CD4-positive, alpha-beta T cell (primary cell): ENCODE measurements at regions of chr9 and their contacts with region 1.

Region 1: DNA sequence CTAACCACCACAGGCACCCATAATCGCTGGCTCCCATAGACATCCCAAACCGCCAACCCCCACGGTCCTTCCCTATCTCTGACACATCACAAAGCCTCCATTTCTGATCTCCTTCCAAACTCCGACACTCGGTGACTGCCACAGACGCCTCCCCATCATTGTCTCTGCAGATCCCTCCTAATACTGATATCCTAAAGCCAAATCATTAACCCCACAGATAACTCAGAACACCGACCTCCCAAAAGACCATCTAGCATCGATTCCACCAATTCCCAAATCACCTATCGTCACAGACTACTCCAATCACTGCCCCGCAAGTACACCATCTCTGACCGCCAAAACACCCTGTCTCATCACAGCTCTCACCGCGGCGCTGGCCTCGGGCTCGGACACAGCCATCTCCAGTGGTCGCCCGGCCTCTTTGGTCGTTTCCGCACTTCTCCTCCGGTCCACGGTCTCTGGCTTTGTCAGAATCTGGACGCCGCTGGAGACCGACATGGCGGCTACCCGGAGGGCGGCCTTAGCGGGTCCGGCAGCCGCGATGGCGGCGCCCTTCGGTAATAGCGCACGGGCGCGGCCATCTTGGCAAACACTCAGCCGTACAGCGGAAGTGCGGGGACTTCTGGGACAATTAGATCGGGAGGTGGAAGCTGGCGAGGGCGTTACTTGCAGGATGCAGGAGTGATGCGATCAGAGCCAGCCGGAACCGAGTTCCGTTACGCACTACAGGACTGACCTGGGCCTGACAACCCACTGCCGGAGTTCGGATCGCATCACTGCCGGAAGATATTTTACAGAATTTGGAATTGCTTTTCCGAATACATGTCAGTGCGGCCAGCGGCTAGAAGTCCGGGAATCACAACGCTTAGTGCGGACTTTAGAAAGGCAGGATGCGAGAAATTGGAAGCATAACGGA is at the start of gene ZFP37:
- DNase-seq: peak; percentile 43 to 87 (median 66)
- ATAC-seq: peak; percentile 93
- H3K4me3 ChIP-seq: peak within 1 kb of the TSS; percentile 63
- H3K4me3 Mint-ChIP-seq: no peak within 1 kb of the TSS
- H3K27ac ChIP-seq: peak within 1 kb of the TSS in 1 of 2 donors; percentile 25
- H3K27ac Mint-ChIP-seq: no peak within 1 kb of the TSS
- H3K4me1 ChIP-seq: peaks cover 11% of the 10 kb centered on the region
- H3K4me1 Mint-ChIP-seq: no peaks in the 10 kb centered on the region
- H3K27me3 ChIP-seq: peaks cover 17 to 18% of the 10 kb centered on the region in 2 experiments
- H3K27me3 Mint-ChIP-seq: peaks cover 18% of the 10 kb centered on the region
- CTCF ChIP-seq: no peak
- total RNA-seq, gene ZFP37: 0.39 to 0.55 TPM

Region 2: GRCh38 chr9:112725961-112726360 is 330.5 kb before region 1 on chr9:
- CTCF ChIA-PET with region 1: no interaction called
- POLR2A ChIA-PET with region 1: no interaction called
- intact Hi-C with region 1: loop called in 1 of 2 experiments (anchors 10 kb)
- DNase-seq: no peak
- ATAC-seq: no peak
- H3K4me3 ChIP-seq: no peak overlapping the region
- H3K4me3 Mint-ChIP-seq: no peak overlapping the region
- H3K27ac ChIP-seq: no peak overlapping the region
- H3K27ac Mint-ChIP-seq: no peak overlapping the region
- H3K4me1 ChIP-seq: no peaks in the 10 kb centered on the region
- H3K4me1 Mint-ChIP-seq: no peaks in the 10 kb centered on the region
- H3K27me3 ChIP-seq: no peaks in the 10 kb centered on the region
- H3K27me3 Mint-ChIP-seq: no peaks in the 10 kb centered on the region
- CTCF ChIP-seq: no peak

Region 3: DNA sequence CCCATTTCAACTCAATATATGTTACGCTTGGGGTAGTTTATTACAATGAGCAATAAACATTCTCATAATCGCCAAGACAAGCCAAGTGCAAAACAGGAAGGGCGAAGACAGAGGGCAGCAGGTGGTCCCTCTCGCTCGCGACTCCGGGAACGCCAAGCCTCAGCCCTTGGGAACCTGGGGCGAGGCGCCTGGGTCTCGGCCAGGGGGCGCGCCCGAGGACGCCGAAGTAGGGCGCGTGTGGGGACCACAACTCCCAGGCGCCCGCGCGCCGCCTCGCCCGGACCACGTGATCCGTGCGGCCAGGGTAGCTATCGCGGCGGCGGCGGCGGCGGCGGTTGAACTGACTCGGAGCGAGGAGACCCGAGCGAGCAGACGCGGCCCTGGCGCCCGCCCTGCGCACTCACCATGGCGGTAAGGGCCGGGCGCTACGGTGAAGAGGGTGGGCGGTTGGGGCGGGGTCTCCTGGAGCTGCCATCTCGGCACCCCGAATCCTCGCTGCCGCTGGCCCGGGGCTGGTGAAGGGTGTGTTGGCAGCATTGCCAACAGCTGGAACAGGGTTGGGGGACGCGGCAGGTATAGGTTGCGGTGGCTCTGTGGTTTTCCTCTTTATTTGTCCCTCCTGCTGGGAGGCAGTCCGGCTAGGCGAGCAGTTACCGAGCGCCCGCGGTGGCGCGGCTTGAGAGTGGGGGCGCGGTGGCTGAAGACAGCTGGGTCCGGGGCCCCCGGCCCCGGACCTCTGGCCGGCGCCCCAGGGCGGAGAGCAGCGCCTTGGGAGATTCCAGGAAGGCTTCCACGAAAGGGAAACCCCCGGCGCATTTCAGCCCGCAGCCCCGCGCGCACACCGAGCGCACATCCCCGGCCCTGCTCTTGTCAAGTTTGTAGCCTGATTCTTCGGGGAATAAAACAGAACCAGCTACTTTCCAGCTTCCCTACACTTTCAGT is 94.5 kb after region 1 on chr9 and contains the start of gene SLC31A2:
- CTCF ChIA-PET with region 1: no interaction called
- POLR2A ChIA-PET with region 1: no interaction called
- intact Hi-C with region 1: loop called in 1 of 2 experiments (anchors 10 kb)
- DNase-seq: peak; percentile 68 to 92 (median 81)
- ATAC-seq: peak; percentile 95
- H3K4me3 ChIP-seq: peak within 1 kb of the TSS; percentile 90
- H3K4me3 Mint-ChIP-seq: peak within 1 kb of the TSS; percentile 88
- H3K27ac ChIP-seq: peak within 1 kb of the TSS; percentile 55 to 56
- H3K27ac Mint-ChIP-seq: peak within 1 kb of the TSS; percentile 53
- H3K4me1 ChIP-seq: peaks cover 25% of the 10 kb centered on the region
- H3K4me1 Mint-ChIP-seq: peaks cover 35% of the 10 kb centered on the region
- H3K27me3 ChIP-seq: peaks cover 2% of the 10 kb centered on the region in 2 experiments
- H3K27me3 Mint-ChIP-seq: peaks cover 6% of the 10 kb centered on the region
- CTCF ChIP-seq: peak; percentile 61
- total RNA-seq, gene SLC31A2: 4.8 to 5.4 TPM

Region 4: GRCh38 chr9:113293285-113293878 is 236.9 kb after region 1 on chr9:
- CTCF ChIA-PET with region 1: no interaction called
- POLR2A ChIA-PET with region 1: no interaction called
- intact Hi-C with region 1: no loop called
- DNase-seq: no peak
- ATAC-seq: no peak
- H3K4me3 ChIP-seq: no peak overlapping the region
- H3K4me3 Mint-ChIP-seq: no peak overlapping the region
- H3K27ac ChIP-seq: no peak overlapping the region
- H3K27ac Mint-ChIP-seq: no peak overlapping the region
- H3K4me1 ChIP-seq: no peaks in the 10 kb centered on the region
- H3K4me1 Mint-ChIP-seq: no peaks in the 10 kb centered on the region
- H3K27me3 ChIP-seq: no peaks in the 10 kb centered on the region
- H3K27me3 Mint-ChIP-seq: no peaks in the 10 kb centered on the region
- CTCF ChIP-seq: no peak